ENCODE measurements at regions of chr19 and their contacts with region 1.

Region 1: DNA sequence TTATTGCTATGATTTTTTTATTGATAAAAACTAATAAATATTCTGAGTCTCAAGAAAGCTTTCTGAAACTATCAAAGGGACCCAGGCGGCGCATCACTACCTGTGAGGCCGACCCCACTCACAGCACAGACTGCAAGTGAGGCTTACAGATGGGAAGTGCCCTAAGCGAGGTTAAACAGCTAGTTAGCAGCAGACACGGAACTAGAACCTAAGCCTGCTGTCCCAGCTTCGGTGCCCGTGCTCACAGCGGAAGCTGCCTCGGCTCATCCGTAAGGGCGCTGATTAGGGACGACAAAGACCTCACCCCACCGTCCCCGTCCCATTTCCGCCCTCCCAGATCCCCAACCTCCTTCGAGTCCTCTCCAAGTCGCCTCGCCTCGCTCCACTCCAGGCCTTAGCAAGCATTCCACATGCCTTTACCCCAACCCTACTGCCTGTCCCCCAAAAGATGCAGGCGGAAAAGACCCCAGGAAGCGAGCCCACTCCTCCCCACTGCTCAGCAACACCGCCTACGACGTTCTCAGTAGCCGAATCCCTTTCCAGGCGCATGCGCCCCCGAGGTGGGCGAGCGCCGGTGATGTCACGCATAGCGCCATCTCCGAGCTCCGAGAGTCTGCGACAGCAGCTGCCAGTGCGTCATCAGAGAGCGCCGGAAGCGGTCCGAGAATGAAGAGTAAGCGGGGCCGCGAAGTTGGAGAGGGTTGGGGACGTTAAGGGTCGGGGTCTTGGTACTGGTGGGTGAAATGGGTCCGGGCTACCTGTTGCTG is at the start of gene POP4:
- DNase-seq: peak; percentile 98 to 99 (median 98)
- ATAC-seq: peak; percentile 96
- H3K4me3 ChIP-seq: peak within 1 kb of the TSS; percentile 61 to 62
- H3K27ac ChIP-seq: peak within 1 kb of the TSS; percentile 93 to 95
- H3K4me1 ChIP-seq: peaks cover 7 to 21% of the 10 kb centered on the region in 2 donors
- H3K27me3 ChIP-seq: no peaks in the 10 kb centered on the region
- CTCF ChIP-seq: no peak
- polyA plus RNA-seq, gene POP4: 51.2 to 56.6 (median 54.4) TPM

Region 2: DNA sequence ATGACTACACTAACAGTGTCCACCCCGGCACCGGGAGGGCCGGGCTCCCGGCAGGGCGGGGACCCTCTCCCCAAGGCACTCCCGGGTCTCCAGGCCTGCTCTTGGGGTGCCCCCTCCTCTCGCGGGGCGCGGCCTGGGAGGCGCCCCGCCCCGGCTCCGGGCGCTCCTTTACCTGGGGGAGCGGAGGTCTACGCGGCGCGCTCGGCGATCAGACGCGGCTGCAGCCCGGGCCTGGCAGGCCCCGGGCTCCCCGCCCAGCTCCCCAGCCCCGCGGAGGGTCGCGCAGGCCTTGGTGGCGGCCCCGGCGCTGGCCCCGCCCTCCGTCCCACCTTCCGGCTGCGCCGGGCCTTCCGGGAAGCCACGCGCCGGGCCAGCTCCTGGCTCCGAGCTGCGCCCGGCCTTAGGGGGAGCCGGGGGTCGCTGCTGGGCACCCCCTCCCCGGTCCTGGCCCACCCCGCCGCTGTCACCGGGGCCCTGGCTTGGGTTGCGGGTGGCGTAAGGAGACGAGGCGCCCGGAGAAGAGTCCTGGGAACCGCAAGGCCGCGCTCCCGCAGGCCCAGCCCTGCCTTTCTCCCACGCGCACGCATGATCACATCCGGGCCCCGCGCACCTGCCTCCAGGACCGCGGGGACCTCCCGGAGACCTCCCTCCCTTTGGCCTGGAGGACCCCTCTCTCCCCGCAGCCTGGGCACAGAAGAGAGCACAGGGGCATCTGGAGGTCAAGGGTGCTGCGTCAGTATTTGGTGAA is 109.3 kb after region 1 on chr19 and contains the start of gene C19orf12:
- intact Hi-C with region 1: loop called in 1 of 2 experiments (anchors 5 kb)
- DNase-seq: peak; percentile 53 to 92 (median 70)
- ATAC-seq: peak; percentile 88
- H3K4me3 ChIP-seq: peak within 1 kb of the TSS; percentile 84 to 85
- H3K27ac ChIP-seq: peak within 1 kb of the TSS; percentile 89 to 93
- H3K4me1 ChIP-seq: peaks cover 16 to 43% of the 10 kb centered on the region in 2 donors
- H3K27me3 ChIP-seq: peaks cover 0 to 2% of the 10 kb centered on the region in 2 donors
- CTCF ChIP-seq: no peak
- polyA plus RNA-seq, gene C19orf12: 18.6 to 25.6 (median 21.7) TPM

Measured in left lung (tissue), 14 donors.